Cardiac septum (tissue), 1 donor: ENCODE measurements at regions of chr12 and their contacts with region 1.

Region 1: GRCh38 chr12:42568952-42569915 is 20.3 kb downstream of the PRICKLE1 start:
- DNase-seq: no peak

Region 2: GRCh38 chr12:42382013-42382680 is 187.1 kb before region 1 on chr12:
- intact Hi-C with region 1: loop called (anchors 10 kb)
- DNase-seq: no peak